ENCODE measurements at regions of chr17 and their contacts with region 1.

Region 1: GRCh38 chr17:6753006-6753445 is 2.8 kb upstream of the XAF1 start:
- DNase-seq: peak; percentile 62 to 81 (median 68)
- H3K4me3 ChIP-seq: no peak overlapping the region
- H3K27ac ChIP-seq: peak overlapping the region; percentile 14 to 95
- H3K4me1 ChIP-seq: peaks cover 23% of the 10 kb centered on the region
- H3K27me3 ChIP-seq: no peaks in the 10 kb centered on the region
- CTCF ChIP-seq: no peak
- EP300 ChIP-seq: no peak
- POLR2A ChIP-seq: no peak

Region 2: DNA sequence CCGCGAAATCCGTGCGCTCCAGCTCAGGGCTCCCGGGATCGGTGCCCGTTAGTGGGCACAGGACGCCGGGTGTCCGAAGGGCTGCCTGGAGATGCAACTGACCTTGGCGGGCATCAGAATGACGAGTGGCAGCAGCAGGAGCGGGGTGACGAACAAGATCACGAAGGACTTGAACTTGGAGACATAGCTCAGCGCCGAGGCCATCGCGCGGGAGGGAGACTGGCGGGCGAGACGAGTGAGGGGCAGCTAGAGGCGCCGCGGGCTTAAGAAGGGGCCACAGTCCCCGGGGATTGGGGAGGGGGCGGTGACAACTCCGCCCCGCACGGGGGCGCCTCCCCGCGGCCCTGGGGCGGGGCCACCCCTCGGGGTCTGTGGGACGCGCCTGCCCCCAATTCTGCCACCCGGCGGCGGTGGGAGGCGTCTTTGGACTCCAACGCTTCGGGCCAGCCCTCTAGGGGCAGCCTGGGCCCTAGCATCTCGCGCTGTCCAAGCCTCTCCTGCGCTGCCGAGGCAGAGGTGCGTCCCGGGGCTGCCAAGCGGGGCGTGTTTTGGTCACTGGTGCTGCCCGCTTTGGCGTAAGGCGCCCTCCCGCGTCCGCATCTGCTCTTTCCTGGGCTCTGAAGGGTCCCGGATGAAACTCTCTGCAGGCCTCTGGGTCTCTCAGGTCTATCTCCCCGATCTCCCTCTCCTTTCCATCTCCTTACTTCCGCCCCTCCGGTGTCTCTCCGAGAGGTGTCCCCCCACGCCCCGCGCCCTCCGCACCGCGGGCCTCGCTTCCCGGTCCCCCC is 39.7 kb before region 1 on chr17 and contains the start of gene SLC13A5:
- intact Hi-C with region 1: loop called in 1 of 4 experiments (anchors 5 kb)
- DNase-seq: peak; percentile 44 to 71 (median 63)
- H3K4me3 ChIP-seq: peak within 1 kb of the TSS; percentile 26
- H3K27ac ChIP-seq: no peak within 1 kb of the TSS
- H3K4me1 ChIP-seq: peaks cover 21% of the 10 kb centered on the region
- H3K27me3 ChIP-seq: no peaks in the 10 kb centered on the region
- CTCF ChIP-seq: peak in 2 of 3 donors; percentile 9 to 24
- EP300 ChIP-seq: no peak
- POLR2A ChIP-seq: no peak
- total RNA-seq, gene SLC13A5: 0.57 to 2.6 (median 1.5) TPM

Region 3: DNA sequence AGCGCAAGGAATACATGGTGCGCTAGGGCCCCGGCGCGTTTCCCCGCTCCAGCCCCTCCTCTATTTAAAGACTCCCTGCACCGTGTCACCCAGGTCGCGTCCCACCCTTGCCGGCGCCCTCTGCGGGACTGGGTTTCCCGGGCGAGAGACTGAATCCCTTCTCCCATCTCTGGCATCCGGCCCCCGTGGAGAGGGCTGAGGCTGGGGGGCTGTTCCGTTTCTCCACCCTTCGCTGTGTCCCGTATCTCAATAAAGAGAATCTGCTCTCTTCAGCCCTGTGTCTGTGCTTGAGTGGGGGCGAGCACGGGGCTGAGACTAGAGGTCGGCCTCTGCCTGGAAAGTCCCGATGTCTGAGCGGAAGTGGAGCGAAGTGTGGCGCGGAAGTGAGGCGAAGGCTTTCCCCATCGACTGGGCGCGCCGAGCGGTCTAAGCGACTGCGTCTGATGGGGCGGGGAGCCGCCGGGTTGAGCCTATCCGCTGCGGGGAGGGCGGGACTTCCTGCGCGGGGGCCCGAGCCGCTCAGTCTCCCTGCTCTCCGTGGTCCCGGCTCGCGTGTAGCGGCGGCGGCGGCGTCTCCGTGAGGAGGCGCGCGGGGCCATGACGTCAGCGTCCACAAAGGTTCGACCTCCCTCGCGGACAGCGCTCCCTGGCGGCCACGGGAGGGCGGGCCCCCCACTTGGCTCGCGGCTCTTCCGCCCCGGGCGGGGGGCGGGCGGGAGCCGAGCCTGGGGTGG is 261.4 kb after region 1 on chr17:
- intact Hi-C with region 1: loop called in 1 of 4 experiments (anchors 10 kb)
- DNase-seq: peak; percentile 98 to 99 (median 98)
- H3K4me3 ChIP-seq: peak overlapping the region; percentile 83
- H3K27ac ChIP-seq: peak overlapping the region; percentile 93 to 94
- H3K4me1 ChIP-seq: peaks cover 17% of the 10 kb centered on the region
- H3K27me3 ChIP-seq: no peaks in the 10 kb centered on the region
- CTCF ChIP-seq: peak; percentile 49 to 81 (median 81)
- EP300 ChIP-seq: no peak
- POLR2A ChIP-seq: peak; percentile 83